CD4-positive, alpha-beta T cell (primary cell): ENCODE measurements at regions of chr15 and their contacts with region 1.

Region 1: DNA sequence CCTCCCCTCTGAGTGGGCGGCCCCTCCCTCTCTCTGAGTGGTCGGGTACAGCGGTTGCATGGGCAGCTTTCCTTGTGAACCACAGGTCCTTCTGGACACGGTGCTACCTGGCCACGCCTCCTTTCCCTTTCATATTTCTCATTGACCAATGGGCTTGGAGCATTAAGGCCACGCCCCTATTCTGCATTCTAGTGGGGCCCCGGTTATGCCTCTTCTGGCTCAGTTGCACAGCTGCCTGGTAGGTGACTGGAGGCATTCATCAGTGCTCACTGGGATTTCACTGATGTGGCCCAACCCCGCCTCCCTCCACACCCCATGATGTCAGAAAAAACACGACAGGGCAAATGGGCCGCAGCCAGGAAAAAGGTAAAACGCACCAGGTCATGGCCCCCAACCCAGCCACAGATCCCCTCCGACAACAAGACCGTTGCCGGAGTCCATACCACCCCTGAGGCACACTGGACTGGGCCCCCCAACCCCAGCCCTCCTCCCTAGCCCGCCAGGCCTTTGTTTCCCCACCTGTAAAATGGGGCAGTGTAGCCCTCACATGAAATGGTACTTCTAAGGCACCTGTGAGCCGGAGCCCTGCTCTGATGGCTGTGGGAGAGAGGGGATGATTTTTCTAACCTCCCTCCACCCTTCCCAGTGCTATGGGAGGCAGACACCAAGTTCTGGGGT is 26.3 kb downstream of the NGRN start:
- DNase-seq: peak in 1 of 14 experiments; percentile 47
- ATAC-seq: no peak
- H3K4me3 ChIP-seq: no peak overlapping the region
- H3K4me3 Mint-ChIP-seq: no peak overlapping the region
- H3K27ac ChIP-seq: no peak overlapping the region
- H3K27ac Mint-ChIP-seq: no peak overlapping the region
- H3K4me1 ChIP-seq: peaks cover 13% of the 10 kb centered on the region
- H3K4me1 Mint-ChIP-seq: peaks cover 5% of the 10 kb centered on the region
- H3K27me3 ChIP-seq: no peaks in the 10 kb centered on the region
- H3K27me3 Mint-ChIP-seq: no peaks in the 10 kb centered on the region
- CTCF ChIP-seq: no peak

Region 2: GRCh38 chr15:90306560-90306959 is 14.7 kb after region 1 on chr15:
- CTCF ChIA-PET with region 1: interaction called, 22 read pairs
- POLR2A ChIA-PET with region 1: no interaction called
- intact Hi-C with region 1: no loop called
- DNase-seq: peak in 5 of 14 experiments; percentile 9 to 46 (median 41)
- ATAC-seq: peak; percentile 62
- H3K4me3 ChIP-seq: no peak overlapping the region
- H3K4me3 Mint-ChIP-seq: no peak overlapping the region
- H3K27ac ChIP-seq: peak overlapping the region in 1 of 2 donors; percentile 41
- H3K27ac Mint-ChIP-seq: peak overlapping the region; percentile 63
- H3K4me1 ChIP-seq: peaks cover 10% of the 10 kb centered on the region
- H3K4me1 Mint-ChIP-seq: peaks cover 15% of the 10 kb centered on the region
- H3K27me3 ChIP-seq: no peaks in the 10 kb centered on the region
- H3K27me3 Mint-ChIP-seq: no peaks in the 10 kb centered on the region
- CTCF ChIP-seq: no peak

Region 3: DNA sequence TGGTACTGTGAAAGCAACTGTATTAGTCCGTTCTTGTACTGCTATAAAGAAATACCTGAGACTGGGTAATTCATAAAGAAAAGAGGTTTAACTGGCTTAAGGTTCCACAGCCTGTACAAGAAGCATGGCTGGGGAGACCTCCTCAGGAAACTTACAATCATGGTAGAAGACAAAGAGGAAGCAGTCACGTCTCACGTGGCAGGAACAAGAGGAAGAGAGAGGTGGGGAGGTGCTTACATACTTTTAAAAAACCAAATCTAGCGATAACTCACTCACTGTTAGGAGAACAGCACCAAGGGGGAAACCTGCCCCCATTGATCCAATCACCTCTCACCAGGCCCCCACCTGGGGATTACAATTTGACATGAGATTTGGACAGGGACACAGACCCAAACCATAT is 145.1 kb after region 1 on chr15:
- CTCF ChIA-PET with region 1: no interaction called
- POLR2A ChIA-PET with region 1: no interaction called
- intact Hi-C with region 1: no loop called
- DNase-seq: peak in 1 of 14 experiments; percentile 23
- ATAC-seq: no peak
- H3K4me3 ChIP-seq: no peak overlapping the region
- H3K4me3 Mint-ChIP-seq: no peak overlapping the region
- H3K27ac ChIP-seq: no peak overlapping the region
- H3K27ac Mint-ChIP-seq: peak overlapping the region; percentile 4
- H3K4me1 ChIP-seq: no peaks in the 10 kb centered on the region
- H3K4me1 Mint-ChIP-seq: peaks cover 27% of the 10 kb centered on the region
- H3K27me3 ChIP-seq: no peaks in the 10 kb centered on the region
- H3K27me3 Mint-ChIP-seq: no peaks in the 10 kb centered on the region
- CTCF ChIP-seq: no peak